BJ (cell line): ENCODE measurements at regions of chr14 and their contacts with region 1.

Region 1: DNA sequence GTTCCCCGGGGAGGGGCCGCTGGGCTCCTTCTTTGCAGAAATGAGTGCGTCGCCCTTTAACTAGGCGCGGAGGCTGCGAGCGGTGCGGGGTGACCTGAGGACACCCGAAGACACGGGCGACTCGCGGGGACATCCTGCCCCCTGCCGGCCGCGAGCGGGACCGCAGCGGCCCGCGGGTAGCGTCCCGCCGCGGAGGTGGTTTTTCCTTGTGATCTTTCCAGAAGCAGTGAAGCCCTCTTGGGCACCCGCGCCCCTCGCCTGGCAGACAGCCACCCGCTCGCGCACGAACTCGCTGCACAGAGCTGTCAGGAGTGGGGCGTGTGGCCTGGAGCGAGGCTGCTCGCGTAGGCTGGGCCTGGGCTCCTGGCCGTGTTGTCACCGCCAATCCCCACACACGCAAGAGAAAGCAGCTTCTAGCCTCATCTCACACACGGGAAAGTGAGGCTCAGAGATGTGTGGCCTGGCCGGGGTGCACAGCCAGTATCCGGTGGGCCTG is 67.2 kb downstream of the DIO3 start:
- DNase-seq: no peak
- H3K4me3 ChIP-seq: peak overlapping the region; percentile 9; the same call in 1 of the 2 replicates
- H3K27me3 ChIP-seq: no peaks in the 10 kb centered on the region; the same call in 1 of the 2 replicates
- CTCF ChIP-seq: peak; percentile 74

Region 2: GRCh38 chr14:101573340-101573739 is 55.2 kb before region 1 on chr14:
- CTCF ChIA-PET with region 1: no interaction called
- POLR2A ChIA-PET with region 1: no interaction called
- DNase-seq: no peak
- H3K4me3 ChIP-seq: no peak overlapping the region
- H3K27me3 ChIP-seq: peaks cover 3% of the 10 kb centered on the region; the same call in 1 of the 2 replicates
- CTCF ChIP-seq: no peak

Region 3: DNA sequence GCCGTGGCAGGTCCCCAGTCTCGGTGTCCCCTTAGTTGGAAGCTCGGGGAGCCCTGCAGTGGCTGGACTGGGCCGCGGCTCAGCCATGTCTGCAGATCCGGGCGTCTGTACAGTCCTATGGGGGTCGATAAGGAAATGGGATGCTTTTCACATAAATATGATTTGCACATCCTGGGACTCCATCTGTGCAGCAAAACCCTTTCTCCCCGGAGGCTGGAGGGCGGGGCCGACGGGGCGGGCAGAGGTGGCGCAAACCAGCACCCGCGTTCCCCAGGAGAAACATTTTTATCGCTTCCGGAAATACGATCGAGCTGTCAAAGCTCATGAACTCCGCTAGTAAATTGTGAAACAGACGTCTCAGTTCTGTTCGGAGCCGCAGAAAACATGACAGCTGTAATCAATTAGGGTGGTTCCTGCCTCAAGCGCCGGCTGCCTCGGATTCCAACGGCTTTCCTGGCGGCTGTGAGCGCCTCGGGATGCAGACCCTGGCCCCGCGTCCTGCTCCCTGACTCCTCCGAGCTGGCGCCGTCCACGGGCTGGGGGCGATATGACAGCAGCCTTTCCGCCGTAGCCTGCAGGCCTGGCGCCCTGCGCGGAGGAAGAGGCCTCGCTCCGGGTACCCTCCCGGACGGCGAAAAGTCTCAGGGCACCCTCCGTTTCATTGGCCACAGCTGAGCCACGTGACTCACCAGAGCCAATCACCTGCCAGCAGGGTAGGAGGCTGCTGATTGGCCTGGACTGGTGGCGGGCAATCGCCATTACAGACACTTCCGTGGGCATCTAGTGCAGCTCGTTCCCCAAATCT is 44.3 kb before region 1 on chr14:
- CTCF ChIA-PET with region 1: interaction called, 3 read pairs
- POLR2A ChIA-PET with region 1: interaction called, 11 read pairs
- DNase-seq: peak; percentile 57
- H3K4me3 ChIP-seq: peak overlapping the region; percentile 37
- H3K27me3 ChIP-seq: peaks cover 3% of the 10 kb centered on the region
- CTCF ChIP-seq: 0 out of 2 replicates have a peak, but pooled peaks have one; percentile 4

Region 4: DNA sequence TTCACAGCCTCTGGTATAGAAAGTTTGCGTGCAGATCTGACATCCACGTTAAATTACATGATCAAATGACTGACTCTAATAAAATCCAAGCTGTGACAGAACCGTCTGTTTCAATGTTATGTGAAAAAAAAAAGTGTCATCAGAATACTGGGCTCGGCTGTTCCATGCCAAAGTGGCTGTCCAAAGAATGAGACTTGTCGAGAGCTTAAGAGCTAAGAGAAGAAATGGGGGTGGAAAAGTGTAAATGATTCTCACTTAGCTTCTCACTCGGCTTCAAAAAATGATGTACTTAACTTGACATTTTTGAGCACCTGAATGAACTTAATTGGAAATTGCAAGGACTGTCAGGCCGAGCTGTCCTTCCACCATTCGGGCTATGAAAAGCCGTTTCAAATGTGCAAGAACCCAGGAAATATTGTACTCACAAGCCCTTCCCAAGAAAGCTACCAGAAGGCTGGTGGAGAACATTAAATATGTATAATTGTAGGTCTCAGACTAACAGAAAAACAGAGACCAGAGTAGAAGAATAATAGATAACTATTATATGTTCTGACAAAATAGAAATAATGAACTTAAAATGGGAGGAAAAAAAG is 10.8 kb after region 1 on chr14:
- CTCF ChIA-PET with region 1: interaction called, 15 read pairs
- POLR2A ChIA-PET with region 1: no interaction called
- DNase-seq: no peak
- H3K4me3 ChIP-seq: no peak overlapping the region
- H3K27me3 ChIP-seq: peaks cover 6% of the 10 kb centered on the region; the same call in 1 of the 2 replicates
- CTCF ChIP-seq: no peak

Region 5: GRCh38 chr14:102437997-102438915 is 809.7 kb after region 1 on chr14:
- CTCF ChIA-PET with region 1: no interaction called
- POLR2A ChIA-PET with region 1: no interaction called
- DNase-seq: peak; percentile 11
- H3K4me3 ChIP-seq: no peak overlapping the region
- H3K27me3 ChIP-seq: no peaks in the 10 kb centered on the region
- CTCF ChIP-seq: peak; percentile 79